IMR-90 (cell line): ENCODE measurements at regions of chr9 and their contacts with region 1.

Region 1: DNA sequence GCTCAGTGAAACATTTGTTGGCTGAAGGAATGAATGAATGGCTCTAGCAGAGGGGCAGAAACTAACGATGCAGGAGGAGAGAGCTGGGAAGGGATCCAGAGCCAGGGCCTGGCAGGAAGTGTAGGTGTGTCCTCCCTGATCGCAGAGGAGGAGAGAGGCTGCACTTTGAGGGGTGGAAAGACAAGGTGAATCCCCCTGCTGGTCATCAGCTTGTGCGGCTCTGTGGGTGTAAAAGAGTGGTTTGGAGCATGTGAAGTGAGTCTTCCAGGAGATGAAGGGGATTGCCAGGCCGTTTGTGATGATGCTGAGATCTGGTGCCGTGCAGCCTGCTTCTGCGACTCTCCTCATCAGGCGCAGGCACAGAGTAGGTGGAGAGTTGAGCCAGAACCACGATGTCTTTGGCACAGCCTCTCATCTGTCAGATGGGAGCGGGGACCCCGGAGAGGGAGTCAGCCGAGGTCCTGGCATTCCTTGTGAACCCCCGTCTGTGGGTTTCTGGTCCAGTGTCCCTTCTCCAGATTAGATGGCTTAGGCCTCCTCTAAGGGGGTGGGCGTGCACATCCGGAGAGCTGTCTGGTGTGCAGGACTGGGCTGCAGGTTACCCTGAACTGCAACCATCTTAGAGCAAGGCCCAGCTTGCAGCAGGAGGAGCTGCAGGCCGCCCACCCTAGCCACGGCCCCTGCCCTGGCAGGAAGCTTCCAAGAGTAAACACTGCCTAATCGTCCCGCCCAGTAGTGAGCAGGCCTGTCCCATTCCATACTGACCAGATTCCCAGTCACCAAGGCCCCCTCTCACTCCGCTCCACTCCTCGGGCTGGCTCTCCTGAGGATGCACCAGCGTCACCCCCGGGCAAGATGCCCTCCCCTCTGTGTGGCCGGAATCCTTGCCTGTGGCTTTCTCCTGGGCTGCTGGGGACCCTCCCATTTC is at the start of gene ADAMTS13:
- DNase-seq: peak; percentile 15
- ATAC-seq: no peak
- H3K4me3 ChIP-seq: no peak within 1 kb of the TSS
- H3K27ac ChIP-seq: no peak within 1 kb of the TSS; the same call in 1 of the 2 replicates
- H3K4me1 ChIP-seq: peaks cover 8% of the 10 kb centered on the region; the same call in 1 of the 2 replicates
- H3K27me3 ChIP-seq: no peaks in the 10 kb centered on the region; the same call in 1 of the 2 replicates
- CTCF ChIP-seq: no peak; the same call in 1 of the 2 replicates
- POLR2A ChIP-seq: no peak
- RAD21 ChIP-seq: no peak
- total RNA-seq, gene ADAMTS13: under 0.01 and 0.18 TPM in 2 replicates

Region 2: DNA sequence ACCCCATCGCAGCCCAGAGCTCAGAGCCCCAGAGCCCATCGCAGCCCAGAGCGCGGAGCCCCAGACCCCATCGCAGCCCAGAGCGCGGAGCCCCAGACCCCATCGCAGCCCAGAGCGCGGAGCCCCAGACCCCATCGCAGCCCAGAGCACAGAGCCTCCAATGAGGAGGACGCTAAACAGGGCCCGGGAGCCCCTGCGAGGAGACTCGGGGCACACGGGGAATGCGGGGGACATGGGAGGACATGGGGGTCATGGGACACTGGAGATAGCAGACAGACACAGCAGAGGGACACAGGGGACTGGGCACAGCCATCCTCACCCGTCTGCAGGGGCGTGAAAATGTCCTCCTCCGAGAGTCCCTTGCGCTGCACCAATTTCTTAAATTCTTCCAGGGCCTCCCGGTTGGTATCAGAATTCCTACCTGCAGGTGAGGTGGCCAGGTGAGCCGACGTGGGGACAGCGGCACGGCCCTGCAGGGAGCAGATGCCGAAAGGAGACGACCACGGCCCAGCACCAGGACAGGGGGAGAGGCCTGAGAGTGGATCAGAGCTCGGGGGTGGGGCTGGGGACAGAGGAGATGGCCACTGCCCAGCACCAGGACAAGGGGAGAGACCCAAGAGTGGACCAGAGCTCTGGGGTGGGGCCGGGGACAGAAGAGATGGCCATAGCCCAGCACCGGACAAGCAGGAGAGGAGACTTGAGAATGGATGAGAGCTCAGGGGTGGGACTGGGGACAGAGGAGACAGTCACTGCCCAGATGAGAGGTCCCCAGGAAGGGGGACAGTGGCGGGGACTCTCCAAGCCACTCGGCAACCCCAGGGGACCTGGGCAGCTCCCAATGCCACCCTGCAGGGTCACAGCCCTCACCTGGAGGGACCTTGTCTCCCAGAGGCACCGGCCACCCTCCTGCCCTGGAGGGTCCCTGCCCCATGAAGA is 215.6 kb before region 1 on chr9:
- CTCF ChIA-PET with region 1: no interaction called
- POLR2A ChIA-PET with region 1: no interaction called
- dilution Hi-C with region 1: no loop called
- in situ Hi-C with region 1: no loop called
- intact Hi-C with region 1: no loop called
- DNase-seq: no peak
- ATAC-seq: no peak
- H3K4me3 ChIP-seq: no peak overlapping the region
- H3K27ac ChIP-seq: no peak overlapping the region
- H3K4me1 ChIP-seq: no peaks in the 10 kb centered on the region
- H3K27me3 ChIP-seq: peaks cover 33% of the 10 kb centered on the region
- CTCF ChIP-seq: no peak
- POLR2A ChIP-seq: no peak
- RAD21 ChIP-seq: no peak

Region 3: GRCh38 chr9:133459476-133460404 is 37.9 kb after region 1 on chr9 and contains the start of gene CACFD1:
- CTCF ChIA-PET with region 1: no interaction called
- POLR2A ChIA-PET with region 1: no interaction called
- dilution Hi-C with region 1: no loop called
- in situ Hi-C with region 1: no loop called
- intact Hi-C with region 1: loop called (anchors 5 kb)
- DNase-seq: peak; percentile 81
- ATAC-seq: peak; percentile 93
- H3K4me3 ChIP-seq: peak within 1 kb of the TSS; percentile 73
- H3K27ac ChIP-seq: peak within 1 kb of the TSS; percentile 73
- H3K4me1 ChIP-seq: peaks cover 7% of the 10 kb centered on the region; the same call in 1 of the 2 replicates
- H3K27me3 ChIP-seq: no peaks in the 10 kb centered on the region
- CTCF ChIP-seq: no peak
- POLR2A ChIP-seq: peak; percentile 77
- RAD21 ChIP-seq: no peak
- total RNA-seq, gene CACFD1: 1.9 and 2.0 TPM in 2 replicates

Region 4: DNA sequence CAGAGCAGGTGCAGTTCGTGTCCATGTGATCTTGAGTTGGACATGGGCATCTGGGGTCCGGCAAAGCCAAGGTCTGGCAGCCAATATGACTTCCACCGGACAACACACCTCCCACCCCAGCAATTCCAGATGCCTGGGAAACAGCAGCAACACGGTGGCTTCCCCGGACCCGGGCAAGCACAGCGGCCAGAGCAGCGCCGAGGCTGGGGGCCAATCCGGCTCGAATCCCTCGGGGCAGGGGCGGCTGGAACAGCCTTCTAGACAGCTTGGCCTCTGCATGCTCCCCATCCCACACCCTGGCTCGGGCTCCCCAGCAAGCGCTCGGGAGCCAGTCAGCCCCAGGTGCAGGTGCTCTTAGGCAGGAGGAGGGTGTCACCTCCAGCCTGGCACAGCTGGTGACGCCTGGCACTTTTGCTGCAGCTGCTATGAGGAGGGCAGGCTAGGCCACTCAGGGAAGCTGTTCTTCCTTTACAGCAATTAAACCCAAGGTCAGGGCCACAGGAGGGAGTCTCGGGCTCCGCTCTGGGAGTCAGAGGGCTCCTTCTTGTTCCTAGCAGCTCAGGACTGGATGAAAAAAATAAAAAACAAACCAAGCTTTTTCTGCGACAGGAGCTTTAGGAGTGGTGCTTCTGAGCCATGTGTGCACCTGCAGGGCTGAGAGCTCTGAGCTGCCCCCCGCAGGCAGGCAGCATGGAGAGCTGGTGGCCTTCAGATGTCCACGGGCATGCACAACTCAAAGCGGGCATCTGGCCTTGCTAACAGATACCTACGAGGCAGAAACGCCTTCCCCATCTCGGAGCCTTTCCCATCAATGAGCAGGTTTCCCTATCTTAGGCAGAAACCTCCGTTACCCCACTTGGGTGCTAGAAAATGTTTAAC is 242.5 kb after region 1 on chr9:
- CTCF ChIA-PET with region 1: no interaction called
- POLR2A ChIA-PET with region 1: no interaction called
- dilution Hi-C with region 1: no loop called
- in situ Hi-C with region 1: no loop called
- intact Hi-C with region 1: no loop called
- DNase-seq: no peak
- ATAC-seq: no peak
- H3K4me3 ChIP-seq: no peak overlapping the region
- H3K27ac ChIP-seq: no peak overlapping the region
- H3K4me1 ChIP-seq: no peaks in the 10 kb centered on the region
- H3K27me3 ChIP-seq: peaks cover 6% of the 10 kb centered on the region; the same call in 1 of the 2 replicates
- CTCF ChIP-seq: no peak
- POLR2A ChIP-seq: no peak
- RAD21 ChIP-seq: no peak